Thyroid gland (tissue), 4 donors: ENCODE measurements at regions of chr1 and their contacts with region 1.

Region 1: DNA sequence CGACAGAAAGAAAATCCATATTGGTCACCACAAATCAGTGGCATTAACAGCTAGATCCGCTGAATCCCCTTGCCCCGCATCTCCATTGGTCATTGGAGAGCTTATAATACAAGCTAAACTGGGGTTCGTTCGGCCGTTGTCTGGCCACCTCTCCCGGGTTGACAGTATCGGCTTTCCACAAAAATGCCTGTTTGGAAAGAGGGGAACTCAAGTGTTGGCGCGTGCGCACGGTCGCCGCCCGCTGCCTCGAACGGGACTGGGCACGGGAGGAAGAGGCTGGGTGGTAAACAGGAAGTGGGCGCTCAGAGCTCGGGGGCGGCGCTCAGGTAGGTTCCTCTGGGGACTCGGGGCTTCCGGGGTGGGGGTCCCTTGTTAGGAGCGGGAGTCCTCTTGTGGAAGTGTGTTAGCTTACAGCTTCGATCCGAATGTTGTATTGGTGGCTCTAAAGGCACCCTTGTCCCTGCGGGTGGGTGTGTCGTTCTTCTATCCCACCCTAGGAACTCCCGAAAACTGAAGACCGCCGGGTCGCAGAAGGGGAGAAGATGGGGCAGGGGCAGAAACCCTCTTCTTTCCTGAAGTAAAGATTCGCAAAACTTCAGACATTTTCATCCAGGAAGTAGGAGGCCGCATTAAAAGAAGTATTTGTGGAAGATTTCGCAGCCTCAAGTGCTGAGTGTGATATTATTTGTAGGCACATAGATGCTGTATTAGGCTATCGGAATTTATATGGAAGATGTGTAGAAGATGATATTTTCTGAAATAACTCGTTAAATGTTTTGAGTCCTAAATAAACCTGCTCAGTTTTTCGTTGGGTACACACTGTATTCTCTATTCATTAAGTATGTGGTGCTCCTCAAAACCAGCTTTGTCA is 962 bp downstream of the BROX start:
- DNase-seq: peak; percentile 95 to 96
- H3K4me3 ChIP-seq: peak overlapping the region; percentile 68 to 96 (median 76)
- H3K27ac ChIP-seq: peak overlapping the region; percentile 93 to 98 (median 96)
- H3K4me1 ChIP-seq: peaks cover 13 to 17% of the 10 kb centered on the region in 2 donors
- H3K27me3 ChIP-seq: no peaks in the 10 kb centered on the region
- CTCF ChIP-seq: no peak
- POLR2A ChIP-seq: peak in 1 of 2 donors; percentile 64

Region 2: DNA sequence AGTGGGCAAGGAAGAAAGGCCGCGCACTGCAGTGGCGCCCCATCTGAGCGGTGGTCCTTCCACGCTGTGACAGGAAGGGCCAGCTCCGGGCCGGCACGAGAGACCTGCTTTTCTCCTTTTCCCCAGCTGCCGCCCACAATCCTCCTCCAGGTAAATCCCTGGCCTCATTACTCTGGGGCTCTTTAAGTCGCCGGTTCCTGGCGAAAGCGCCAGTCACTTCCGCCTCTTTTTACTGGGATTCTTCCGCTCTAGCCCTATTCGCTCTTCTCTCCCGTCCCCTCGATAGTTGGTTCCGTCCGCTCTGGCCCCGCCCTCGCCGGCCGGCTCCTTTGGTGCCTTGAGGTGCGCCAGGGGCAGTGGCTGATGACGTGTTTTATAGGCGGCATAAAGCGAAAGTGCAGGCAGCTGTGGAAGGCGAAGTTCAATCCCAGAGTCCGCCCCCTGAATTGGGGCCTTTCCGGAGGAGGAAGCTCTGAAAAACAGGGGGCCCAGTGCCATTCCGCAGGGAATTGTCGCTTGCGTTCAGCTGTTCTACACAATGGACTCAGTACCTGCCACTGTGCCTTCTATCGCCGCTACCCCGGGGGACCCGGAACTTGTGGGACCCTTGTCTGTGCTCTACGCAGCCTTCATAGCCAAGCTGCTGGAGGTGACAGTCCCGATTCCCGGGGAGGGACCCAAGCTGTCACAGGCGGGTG is 69.2 kb before region 1 on chr1:
- intact Hi-C with region 1: loop called (anchors 5 kb)
- DNase-seq: peak; percentile 97 to 98
- H3K4me3 ChIP-seq: peak overlapping the region; percentile 61 to 78 (median 70)
- H3K27ac ChIP-seq: peak overlapping the region; percentile 88 to 92 (median 89)
- H3K4me1 ChIP-seq: peaks cover 3 to 11% of the 10 kb centered on the region in 2 donors
- H3K27me3 ChIP-seq: no peaks in the 10 kb centered on the region
- CTCF ChIP-seq: peak in 1 of 6 experiments; percentile 22
- POLR2A ChIP-seq: peak in 1 of 2 donors; percentile 71